Sigmoid colon (tissue), 7 donors: ENCODE measurements at regions of chr19 and their contacts with region 1.

Region 1: GRCh38 chr19:44356383-44357111 is at the start of gene ZNF112:
- DNase-seq: peak; percentile 93
- H3K4me3 ChIP-seq: peak within 1 kb of the TSS; percentile 39 to 60 (median 54)
- H3K27ac ChIP-seq: peak within 1 kb of the TSS; percentile 58 to 69 (median 62)
- H3K4me1 ChIP-seq: peaks cover 0 to 10% (median 5%) of the 10 kb centered on the region in 4 donors
- H3K27me3 ChIP-seq: no peaks in the 10 kb centered on the region
- CTCF ChIP-seq: no peak
- EP300 ChIP-seq: no peak
- POLR2A ChIP-seq: no peak
- total RNA-seq, gene ZNF112: 3.3 to 8.9 (median 4.7) TPM

Region 2: GRCh38 chr19:44260363-44261070 is 96.0 kb before region 1 on chr19:
- intact Hi-C with region 1: no loop called
- DNase-seq: no peak
- H3K4me3 ChIP-seq: peak overlapping the region in 3 of 4 donors; percentile 51 to 54 (median 53)
- H3K27ac ChIP-seq: peak overlapping the region in 3 of 4 donors; percentile 77 to 82 (median 80)
- H3K4me1 ChIP-seq: peaks cover 0 to 6% (median 0%) of the 10 kb centered on the region in 4 donors
- H3K27me3 ChIP-seq: no peaks in the 10 kb centered on the region
- CTCF ChIP-seq: no peak
- EP300 ChIP-seq: no peak
- POLR2A ChIP-seq: no peak

Region 3: DNA sequence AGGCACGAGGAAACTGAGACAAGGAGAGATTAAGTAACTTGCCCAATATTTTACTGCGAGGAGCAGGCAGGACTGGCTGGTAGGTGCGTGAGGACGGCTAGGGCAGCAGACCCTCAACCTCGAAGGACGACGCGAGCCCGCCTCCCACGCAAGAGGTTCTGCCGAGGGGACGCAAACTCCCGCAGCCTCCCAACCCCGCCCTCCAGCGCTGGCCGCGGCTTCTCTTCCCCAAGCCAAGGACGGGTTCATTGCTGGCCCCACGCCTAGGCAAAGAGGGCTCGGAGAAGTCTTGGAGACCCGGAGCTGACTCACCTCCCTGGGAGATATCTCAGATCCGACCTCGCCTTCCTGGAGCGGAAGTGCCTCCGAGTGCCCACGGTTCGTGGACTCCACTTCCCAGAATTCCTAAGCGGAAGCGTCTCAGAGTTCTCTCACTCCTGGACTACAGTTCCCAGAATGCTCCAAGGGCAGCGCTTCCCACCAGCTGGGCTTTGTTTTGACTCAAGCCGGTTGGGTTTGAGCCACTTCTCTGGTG is 51.8 kb before region 1 on chr19 and contains the start of gene ZNF235:
- intact Hi-C with region 1: loop called (anchors 2 kb)
- DNase-seq: peak; percentile 95
- H3K4me3 ChIP-seq: peak within 1 kb of the TSS; percentile 57 to 84 (median 78)
- H3K27ac ChIP-seq: peak within 1 kb of the TSS; percentile 76 to 89 (median 89)
- H3K4me1 ChIP-seq: peaks cover 0 to 12% (median 10%) of the 10 kb centered on the region in 4 donors
- H3K27me3 ChIP-seq: no peaks in the 10 kb centered on the region
- CTCF ChIP-seq: no peak
- EP300 ChIP-seq: no peak
- POLR2A ChIP-seq: peak; percentile 32 to 42
- total RNA-seq, gene ZNF235: 5.8 to 12.7 (median 9.0) TPM

Region 4: DNA sequence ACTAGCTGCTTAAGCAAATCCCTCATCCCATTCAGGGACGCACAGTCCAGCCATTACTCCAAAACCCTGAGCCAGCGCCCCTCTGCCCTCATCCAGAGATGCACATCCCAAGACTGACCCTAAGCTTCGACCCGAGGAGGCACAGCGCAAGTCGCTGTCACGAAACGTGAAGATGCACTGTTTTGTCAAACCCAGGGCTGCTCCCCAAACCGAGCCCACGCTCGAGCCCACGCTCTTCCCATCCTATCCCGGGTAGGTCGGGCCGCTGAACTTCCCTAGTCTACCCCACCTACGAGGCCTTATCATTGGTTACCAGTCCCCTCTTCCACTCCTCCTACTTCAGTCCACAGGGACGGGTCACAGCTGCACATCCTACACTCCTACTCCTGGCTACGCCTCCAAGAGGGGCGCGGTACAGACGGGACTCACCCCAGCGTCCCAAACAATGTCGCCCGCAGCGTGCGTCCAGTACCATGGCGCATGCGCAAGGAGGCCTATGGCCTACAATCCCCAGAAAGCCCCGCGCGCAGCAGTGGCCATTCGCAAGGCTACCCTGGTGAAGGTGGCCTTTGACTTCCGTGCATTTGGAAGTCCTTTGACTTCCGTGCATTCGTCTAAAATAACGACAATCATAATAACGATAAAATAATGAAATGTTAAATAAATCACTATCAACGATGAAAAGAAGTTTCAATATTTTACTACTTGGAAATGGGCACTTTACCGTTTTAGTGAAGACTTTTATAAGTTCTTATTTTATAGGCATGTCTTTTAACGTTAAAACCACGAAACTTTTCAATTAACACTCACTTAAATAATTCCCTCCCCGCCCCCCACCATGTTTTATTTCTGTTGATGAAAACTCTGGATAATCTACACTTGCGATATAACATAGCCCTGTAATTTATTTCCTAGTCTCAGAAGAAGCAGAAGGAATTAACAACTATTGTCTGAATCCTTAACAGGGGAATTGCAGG is 44.9 kb after region 1 on chr19 and contains the start of gene ZNF285:
- intact Hi-C with region 1: loop called (anchors 2 kb)
- DNase-seq: peak; percentile 95
- H3K4me3 ChIP-seq: peak within 1 kb of the TSS; percentile 37 to 59 (median 53)
- H3K27ac ChIP-seq: peak within 1 kb of the TSS; percentile 21 to 61 (median 50)
- H3K4me1 ChIP-seq: no peaks in the 10 kb centered on the region
- H3K27me3 ChIP-seq: no peaks in the 10 kb centered on the region
- CTCF ChIP-seq: no peak
- EP300 ChIP-seq: no peak
- POLR2A ChIP-seq: no peak
- total RNA-seq, gene ZNF285: 3.2 to 6.3 (median 5.0) TPM

Region 5: DNA sequence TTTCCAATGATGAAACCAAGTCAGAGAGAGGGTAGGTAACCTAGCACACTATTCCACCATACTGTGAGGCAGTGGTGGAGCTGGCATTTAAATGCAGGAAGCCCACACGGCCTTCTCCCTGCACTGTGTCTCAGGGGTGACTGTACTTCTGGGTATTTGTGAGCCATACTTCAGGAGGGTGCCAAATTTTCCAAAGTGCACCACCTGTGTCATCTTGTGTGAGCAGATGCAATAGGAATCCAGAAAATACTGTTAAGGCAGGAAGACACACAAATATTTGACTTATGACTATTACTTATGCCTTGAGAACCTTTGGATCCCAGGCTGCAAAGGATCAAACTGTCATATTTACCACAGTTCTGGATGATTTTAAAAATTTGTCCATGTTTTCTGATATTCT is 74.4 kb after region 1 on chr19:
- intact Hi-C with region 1: no loop called
- DNase-seq: no peak
- H3K4me3 ChIP-seq: no peak overlapping the region
- H3K27ac ChIP-seq: no peak overlapping the region
- H3K4me1 ChIP-seq: no peaks in the 10 kb centered on the region
- H3K27me3 ChIP-seq: no peaks in the 10 kb centered on the region
- CTCF ChIP-seq: no peak
- EP300 ChIP-seq: no peak
- POLR2A ChIP-seq: no peak

Region 6: GRCh38 chr19:44500148-44500956 is 143.8 kb after region 1 on chr19 and contains the start of gene ZNF180:
- intact Hi-C with region 1: loop called (anchors 2 kb)
- DNase-seq: peak; percentile 96
- H3K4me3 ChIP-seq: peak within 1 kb of the TSS; percentile 67 to 90 (median 80)
- H3K27ac ChIP-seq: peak within 1 kb of the TSS; percentile 82 to 89 (median 84)
- H3K4me1 ChIP-seq: peaks cover 0 to 20% (median 16%) of the 10 kb centered on the region in 4 donors
- H3K27me3 ChIP-seq: no peaks in the 10 kb centered on the region
- CTCF ChIP-seq: peak; percentile 46 to 72 (median 68)
- EP300 ChIP-seq: no peak
- POLR2A ChIP-seq: peak; percentile 80
- total RNA-seq, gene ZNF180: 8.4 to 19.5 (median 10.2) TPM